Mammary epithelial cell (primary cell): ENCODE measurements at regions of chrX and their contacts with region 1.

Region 1: GRCh38 chrX:12013220-12013619 is 125.1 kb upstream of the FRMPD4 start:
- DNase-seq: peak; percentile 72
- H3K4me3 ChIP-seq: no peak overlapping the region
- H3K27ac ChIP-seq: peak overlapping the region; percentile 24
- H3K4me1 ChIP-seq: peaks cover 41% of the 10 kb centered on the region
- H3K27me3 ChIP-seq: no peaks in the 10 kb centered on the region
- CTCF ChIP-seq: no peak

Region 2: DNA sequence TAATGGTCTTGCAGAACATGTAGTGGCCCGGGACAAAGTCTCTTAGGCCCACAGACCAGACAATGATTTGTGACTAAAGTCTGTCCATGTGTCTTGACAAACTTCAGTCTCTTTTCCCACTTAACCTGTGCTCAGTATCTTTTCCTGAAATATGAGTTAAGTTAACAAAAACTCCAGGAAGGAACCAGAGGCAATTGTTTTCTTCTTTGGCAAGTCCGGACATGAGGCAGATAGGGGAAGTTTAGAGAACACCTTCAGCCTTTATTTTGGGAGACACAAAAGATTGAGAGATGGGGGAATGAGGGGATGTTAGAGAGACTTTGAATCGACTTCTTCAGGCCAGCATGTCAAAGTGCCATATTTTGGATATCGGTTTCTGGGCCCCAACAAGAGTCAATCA is 44.9 kb after region 1 on chrX:
- CTCF ChIA-PET with region 1: no interaction called
- dilution Hi-C with region 1: no loop called
- in situ Hi-C with region 1: no loop called
- intact Hi-C with region 1: loop called (anchors 1 kb)
- DNase-seq: peak; percentile 53
- H3K4me3 ChIP-seq: no peak overlapping the region
- H3K27ac ChIP-seq: peak overlapping the region; percentile 49
- H3K4me1 ChIP-seq: peaks cover 16% of the 10 kb centered on the region
- H3K27me3 ChIP-seq: no peaks in the 10 kb centered on the region
- CTCF ChIP-seq: no peak

Region 3: DNA sequence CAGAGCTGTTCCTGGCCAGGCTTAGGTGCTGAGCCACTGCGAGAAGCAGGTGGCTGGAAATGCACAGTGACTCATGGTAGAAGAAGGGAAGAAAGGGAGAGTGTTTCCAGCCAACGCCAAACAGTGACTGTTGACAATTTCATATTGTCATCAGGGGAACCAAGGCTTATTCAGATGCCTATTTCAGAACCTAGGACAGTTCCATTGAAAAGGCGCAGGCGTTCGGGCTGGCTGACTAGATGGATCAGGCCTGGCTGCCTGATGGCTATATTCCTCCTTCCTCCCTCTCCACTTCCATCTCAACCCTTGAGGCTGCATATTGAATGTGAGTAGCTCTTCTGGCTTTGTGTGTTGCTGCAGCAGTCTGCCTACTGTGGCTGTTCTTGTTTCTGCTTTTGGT is 52.0 kb after region 1 on chrX:
- CTCF ChIA-PET with region 1: no interaction called
- dilution Hi-C with region 1: no loop called
- in situ Hi-C with region 1: no loop called
- intact Hi-C with region 1: loop called (anchors 5 kb)
- DNase-seq: peak; percentile 62
- H3K4me3 ChIP-seq: no peak overlapping the region
- H3K27ac ChIP-seq: no peak overlapping the region
- H3K4me1 ChIP-seq: no peaks in the 10 kb centered on the region
- H3K27me3 ChIP-seq: no peaks in the 10 kb centered on the region
- CTCF ChIP-seq: no peak

Region 4: GRCh38 chrX:12505127-12505526 is 491.9 kb after region 1 on chrX:
- CTCF ChIA-PET with region 1: interaction called, 18 read pairs
- dilution Hi-C with region 1: no loop called
- in situ Hi-C with region 1: no loop called
- intact Hi-C with region 1: no loop called
- DNase-seq: no peak
- H3K4me3 ChIP-seq: no peak overlapping the region
- H3K27ac ChIP-seq: no peak overlapping the region
- H3K4me1 ChIP-seq: no peaks in the 10 kb centered on the region
- H3K27me3 ChIP-seq: no peaks in the 10 kb centered on the region
- CTCF ChIP-seq: no peak